ENCODE measurements at regions of chr14 and their contacts with region 1.

Region 1: GRCh38 chr14:23910101-23910875 is 43.3 kb upstream of the DHRS4 start:
- DNase-seq: peak; percentile 83
- H3K27ac ChIP-seq: no peak overlapping the region
- CTCF ChIP-seq: peak; percentile 73

Region 2: DNA sequence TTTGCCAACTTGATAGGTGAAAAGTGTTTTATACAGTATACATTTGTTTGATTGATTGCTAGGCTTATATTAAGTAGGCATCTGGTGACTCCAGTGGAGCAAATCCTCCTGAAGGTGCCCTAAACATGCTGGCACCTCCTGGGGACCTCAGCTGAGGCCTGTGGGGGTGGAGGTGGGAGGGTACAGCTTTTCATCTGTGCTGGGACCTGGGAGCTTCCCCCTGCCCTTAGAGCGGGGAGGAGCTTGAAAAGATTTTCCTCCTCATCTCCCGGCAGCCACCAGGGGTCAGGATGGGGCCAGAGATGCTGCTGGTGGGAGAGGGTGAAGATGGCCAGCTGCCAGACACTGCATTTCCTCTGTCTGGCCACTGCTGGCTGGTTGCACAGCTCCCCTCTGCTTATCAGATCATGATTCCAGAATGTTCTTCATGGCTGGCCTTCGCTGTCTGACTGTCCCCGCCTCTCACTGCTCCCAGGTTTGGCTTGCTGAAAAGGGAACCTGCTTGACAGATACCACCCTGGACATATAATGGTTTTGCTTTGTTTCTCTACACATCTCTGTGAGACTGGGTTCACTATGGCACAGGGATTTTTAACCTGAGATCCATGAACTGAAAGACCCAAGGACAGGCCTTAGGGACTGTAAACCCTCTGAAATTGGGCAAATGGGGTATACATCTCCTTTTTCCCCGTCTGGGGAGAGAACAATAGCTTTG is 321.2 kb before region 1 on chr14:
- CTCF ChIA-PET with region 1: interaction called, 15 read pairs
- POLR2A ChIA-PET with region 1: no interaction called
- DNase-seq: peak; percentile 85
- H3K27ac ChIP-seq: no peak overlapping the region
- CTCF ChIP-seq: peak; percentile 70

Region 3: GRCh38 chr14:23631702-23632460 is 278.4 kb before region 1 on chr14:
- CTCF ChIA-PET with region 1: interaction called, 17 read pairs
- POLR2A ChIA-PET with region 1: no interaction called
- DNase-seq: peak; percentile 88
- H3K27ac ChIP-seq: no peak overlapping the region
- CTCF ChIP-seq: peak; percentile 83

Measured in RWPE1 (cell line).